ENCODE measurements at regions of chr2 and their contacts with region 1.

Region 1: GRCh38 chr2:134411828-134412638 is 158.2 kb downstream of the MGAT5 start:
- DNase-seq: peak; percentile 93
- H3K4me3 ChIP-seq: no peak overlapping the region
- H3K27ac ChIP-seq: no peak overlapping the region
- H3K4me1 ChIP-seq: peaks cover 19 to 42% (median 31%) of the 10 kb centered on the region in 4 donors
- H3K27me3 ChIP-seq: no peaks in the 10 kb centered on the region
- CTCF ChIP-seq: peak; percentile 60 to 73 (median 61)
- EP300 ChIP-seq: no peak
- POLR2A ChIP-seq: no peak

Region 2: GRCh38 chr2:133886735-133887660 is 525.0 kb before region 1 on chr2:
- intact Hi-C with region 1: loop called (anchors 5 kb)
- DNase-seq: peak; percentile 91
- H3K4me3 ChIP-seq: no peak overlapping the region
- H3K27ac ChIP-seq: peak overlapping the region in 1 of 4 donors; percentile 52
- H3K4me1 ChIP-seq: peaks cover 0 to 17% (median 15%) of the 10 kb centered on the region in 4 donors
- H3K27me3 ChIP-seq: no peaks in the 10 kb centered on the region
- CTCF ChIP-seq: peak; percentile 55 to 66 (median 57)
- EP300 ChIP-seq: no peak
- POLR2A ChIP-seq: no peak

Region 3: GRCh38 chr2:134245340-134245984 is 166.6 kb before region 1 on chr2:
- intact Hi-C with region 1: loop called (anchors 5 kb)
- DNase-seq: peak; percentile 93
- H3K4me3 ChIP-seq: no peak overlapping the region
- H3K27ac ChIP-seq: no peak overlapping the region
- H3K4me1 ChIP-seq: peaks cover 19 to 37% (median 21%) of the 10 kb centered on the region in 4 donors
- H3K27me3 ChIP-seq: no peaks in the 10 kb centered on the region
- CTCF ChIP-seq: peak; percentile 63 to 77 (median 66)
- EP300 ChIP-seq: no peak
- POLR2A ChIP-seq: no peak

Region 4: GRCh38 chr2:134348239-134348638 is 63.8 kb before region 1 on chr2:
- intact Hi-C with region 1: no loop called
- DNase-seq: no peak
- H3K4me3 ChIP-seq: no peak overlapping the region
- H3K27ac ChIP-seq: peak overlapping the region in 1 of 4 donors; percentile 14
- H3K4me1 ChIP-seq: peaks cover 0 to 5% (median 2%) of the 10 kb centered on the region in 4 donors
- H3K27me3 ChIP-seq: no peaks in the 10 kb centered on the region
- CTCF ChIP-seq: no peak
- EP300 ChIP-seq: no peak
- POLR2A ChIP-seq: no peak

Region 5: GRCh38 chr2:134375935-134376334 is 36.1 kb before region 1 on chr2:
- intact Hi-C with region 1: loop called (anchors 5 kb)
- DNase-seq: no peak
- H3K4me3 ChIP-seq: no peak overlapping the region
- H3K27ac ChIP-seq: peak overlapping the region; percentile 73 to 82 (median 82)
- H3K4me1 ChIP-seq: peaks cover 56 to 62% (median 59%) of the 10 kb centered on the region in 4 donors
- H3K27me3 ChIP-seq: no peaks in the 10 kb centered on the region
- CTCF ChIP-seq: peak; percentile 36 to 60 (median 49)
- EP300 ChIP-seq: no peak
- POLR2A ChIP-seq: no peak

Region 6: DNA sequence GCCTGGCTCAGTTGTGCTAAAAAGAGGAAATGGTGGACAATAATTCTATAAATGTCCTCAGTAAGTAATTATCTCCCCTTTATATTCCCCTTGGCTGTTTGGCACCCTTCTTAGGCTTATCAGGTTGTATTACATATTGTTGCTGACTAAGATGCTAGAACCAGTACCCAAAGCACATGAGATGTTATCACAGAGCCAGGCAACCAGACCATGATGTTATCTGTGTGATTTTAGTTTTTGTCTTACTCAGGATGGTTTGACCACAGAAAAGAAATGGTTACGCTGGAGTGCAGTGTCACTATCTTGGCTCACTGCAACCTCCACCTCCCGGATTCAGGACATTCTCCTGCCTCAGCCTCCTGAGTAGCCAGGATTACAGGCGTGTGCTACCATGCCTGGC is 1134.4 kb after region 1 on chr2:
- intact Hi-C with region 1: no loop called
- DNase-seq: no peak
- H3K4me3 ChIP-seq: no peak overlapping the region
- H3K27ac ChIP-seq: no peak overlapping the region
- H3K4me1 ChIP-seq: no peaks in the 10 kb centered on the region
- H3K27me3 ChIP-seq: no peaks in the 10 kb centered on the region
- CTCF ChIP-seq: no peak
- EP300 ChIP-seq: no peak
- POLR2A ChIP-seq: no peak

Measured in esophagus muscularis mucosa (tissue), 4 donors.